ENCODE measurements at regions of chr3 and their contacts with region 1.

Region 1: GRCh38 chr3:354432-354831 is 157.9 kb downstream of the CHL1 start:
- DNase-seq: peak in 1 of 2 experiments; percentile 63
- H3K4me3 ChIP-seq: no peak overlapping the region
- H3K27ac ChIP-seq: no peak overlapping the region
- H3K4me1 ChIP-seq: no peaks in the 10 kb centered on the region
- H3K27me3 ChIP-seq: peaks cover 0 to 2% (median under 1%) of the 10 kb centered on the region in 4 experiments; a peak in 2 of 7 replicates
- CTCF ChIP-seq: peak in 2 of 3 experiments; percentile 64 to 73; a peak in 3 of 4 replicates
- EP300 ChIP-seq: no peak
- POLR2A ChIP-seq: no peak
- RAD21 ChIP-seq: peak; percentile 91 to 92

Region 2: DNA sequence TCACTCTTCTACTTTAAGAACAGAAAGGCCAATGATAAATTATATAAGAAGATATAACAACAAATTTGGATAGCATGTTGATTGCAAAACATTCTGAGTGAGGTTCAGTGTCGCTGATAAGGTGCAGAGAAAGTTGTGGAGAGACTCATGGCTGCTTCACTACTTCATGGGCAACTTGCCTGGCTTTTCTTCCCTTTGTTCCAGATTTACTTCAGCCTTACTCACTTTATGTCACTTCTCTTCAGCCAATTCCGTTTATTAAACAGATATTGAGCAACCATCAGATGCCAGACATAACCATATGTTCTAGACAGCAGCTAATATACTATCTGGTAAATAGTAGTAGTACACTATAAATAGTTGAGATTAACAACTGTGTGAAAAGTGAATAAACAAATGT is 307.9 kb before region 1 on chr3:
- CTCF ChIA-PET with region 1: interaction called, 70 read pairs
- POLR2A ChIA-PET with region 1: no interaction called
- DNase-seq: no peak
- H3K4me3 ChIP-seq: no peak overlapping the region
- H3K27ac ChIP-seq: no peak overlapping the region
- H3K4me1 ChIP-seq: no peaks in the 10 kb centered on the region
- H3K27me3 ChIP-seq: no peaks in the 10 kb centered on the region
- CTCF ChIP-seq: no peak
- EP300 ChIP-seq: no peak
- POLR2A ChIP-seq: no peak
- RAD21 ChIP-seq: no peak

Region 3: GRCh38 chr3:396293-396692 is 41.9 kb after region 1 on chr3:
- CTCF ChIA-PET with region 1: no interaction called
- POLR2A ChIA-PET with region 1: no interaction called
- DNase-seq: no peak
- H3K4me3 ChIP-seq: no peak overlapping the region
- H3K27ac ChIP-seq: no peak overlapping the region
- H3K4me1 ChIP-seq: no peaks in the 10 kb centered on the region
- H3K27me3 ChIP-seq: no peaks in the 10 kb centered on the region
- CTCF ChIP-seq: no peak
- EP300 ChIP-seq: no peak
- POLR2A ChIP-seq: no peak
- RAD21 ChIP-seq: no peak

Region 4: DNA sequence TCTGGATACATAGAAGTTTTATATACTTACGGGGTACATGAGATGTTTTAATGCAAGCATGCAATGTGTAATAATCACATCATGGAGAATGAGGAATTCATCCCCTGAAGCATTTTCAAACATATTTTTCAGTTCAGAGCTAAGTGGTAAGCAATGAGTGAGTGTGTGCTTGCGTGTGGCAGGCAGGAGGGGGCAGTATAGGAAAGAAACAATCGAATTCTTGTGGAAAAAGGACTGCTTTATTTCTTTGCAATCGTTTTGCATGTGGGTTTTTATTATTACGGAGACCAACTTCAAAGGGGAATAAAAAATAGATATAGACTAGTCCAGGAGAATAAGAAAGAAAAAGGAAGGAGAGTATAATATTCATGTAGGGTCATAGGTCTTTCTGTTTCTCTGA is 113.7 kb after region 1 on chr3:
- CTCF ChIA-PET with region 1: no interaction called
- POLR2A ChIA-PET with region 1: no interaction called
- DNase-seq: no peak
- H3K4me3 ChIP-seq: no peak overlapping the region
- H3K27ac ChIP-seq: no peak overlapping the region
- H3K4me1 ChIP-seq: no peaks in the 10 kb centered on the region
- H3K27me3 ChIP-seq: no peaks in the 10 kb centered on the region
- CTCF ChIP-seq: peak in 2 of 3 experiments; percentile 44 to 67; a peak in 3 of 4 replicates
- EP300 ChIP-seq: no peak
- POLR2A ChIP-seq: no peak
- RAD21 ChIP-seq: peak; percentile 52 to 55